ENCODE measurements at regions of chr15 and their contacts with region 1.

Region 1: DNA sequence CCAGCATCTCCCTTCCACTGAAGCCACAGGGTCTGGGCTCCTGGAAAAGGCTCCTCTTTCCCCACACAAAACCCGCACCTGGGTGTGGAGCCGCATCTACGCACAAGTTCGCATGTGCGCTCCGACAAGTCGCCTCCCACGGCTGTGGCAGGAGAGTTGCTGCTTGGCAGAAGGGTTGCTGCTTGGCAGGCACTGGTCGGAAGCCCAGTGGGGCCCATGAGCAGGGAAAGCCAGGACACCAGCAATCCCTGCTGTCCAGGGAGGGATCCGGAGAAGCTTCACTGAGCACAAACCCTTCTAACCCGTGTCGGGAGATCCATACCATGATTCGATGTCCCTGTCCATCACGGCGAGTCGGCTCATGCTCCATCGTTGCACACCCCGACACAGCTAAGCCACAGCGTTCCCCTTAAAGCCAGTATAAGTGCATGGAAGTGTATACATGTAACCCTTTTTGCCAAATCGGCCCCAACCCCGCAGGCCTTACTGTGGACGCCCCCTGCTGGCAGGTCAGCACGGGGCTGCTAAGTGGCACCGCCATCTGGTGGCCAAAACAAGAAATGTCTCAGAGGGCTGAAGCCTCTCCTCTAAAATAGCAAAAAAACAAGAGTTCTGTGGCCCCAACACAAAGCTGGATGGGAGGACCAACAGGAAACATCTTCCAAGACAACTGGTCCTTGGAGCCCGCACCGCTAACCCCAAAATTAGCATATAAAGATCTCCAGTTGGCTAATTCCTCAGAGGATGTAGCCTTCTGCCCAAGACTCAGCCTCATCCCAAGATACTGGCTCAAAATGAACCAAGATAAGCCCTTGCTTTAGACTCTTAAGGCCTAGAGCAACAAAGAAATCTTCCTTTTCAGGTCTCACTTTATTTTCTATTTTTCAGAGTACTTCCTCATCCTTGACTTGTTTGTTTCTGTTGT is 8.3 kb downstream of the ANKRD63 start:
- DNase-seq: peak; percentile 19
- ATAC-seq: peak; percentile 78
- H3K4me3 ChIP-seq: no peak overlapping the region
- H3K27ac ChIP-seq: no peak overlapping the region
- H3K4me1 ChIP-seq: peaks cover 6% of the 10 kb centered on the region
- H3K27me3 ChIP-seq: 0 out of 4 replicates have a peak, but pooled peaks cover 0 to 2% of the 10 kb centered on the region in 2 experiments
- CTCF ChIP-seq: peak; percentile 100; a peak in 5 of 6 replicates
- EP300 ChIP-seq: no peak
- POLR2A ChIP-seq: no peak
- RAD21 ChIP-seq: peak; percentile 98

Region 2: DNA sequence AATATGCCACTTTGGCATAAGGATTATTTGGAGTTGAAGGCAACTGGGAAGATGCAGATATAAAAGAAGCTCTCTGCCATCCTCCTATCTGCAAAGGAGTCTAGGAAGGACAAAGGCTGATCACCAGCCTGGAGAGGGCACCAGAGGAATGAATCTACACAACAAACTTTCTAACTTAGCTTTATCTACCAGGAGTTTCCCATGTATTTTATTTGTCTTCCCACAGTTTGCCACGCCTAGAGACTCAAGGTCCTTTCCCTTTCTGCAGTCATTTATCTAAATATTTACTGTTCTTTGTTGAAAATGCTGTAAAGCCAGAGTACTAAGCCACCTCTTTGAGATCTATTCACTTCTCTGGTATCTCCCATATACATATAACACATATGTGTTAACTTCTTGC is 386.8 kb before region 1 on chr15:
- CTCF ChIA-PET with region 1: interaction called, 12 read pairs
- POLR2A ChIA-PET with region 1: no interaction called
- RAD21 ChIA-PET with region 1: interaction called, 7 read pairs
- SMC1A ChIA-PET with region 1: interaction called, 10 read pairs
- in situ Hi-C with region 1: loop called (anchors 10 kb)
- intact Hi-C with region 1: loop called (anchors 10 kb)
- DNase-seq: no peak
- ATAC-seq: peak; percentile 75
- H3K4me3 ChIP-seq: no peak overlapping the region
- H3K27ac ChIP-seq: no peak overlapping the region
- H3K4me1 ChIP-seq: no peaks in the 10 kb centered on the region
- H3K27me3 ChIP-seq: no peaks in the 10 kb centered on the region; a peak in 1 of 4 replicates
- CTCF ChIP-seq: peak; percentile 20 to 55 (median 35); a peak in 4 of 6 replicates
- EP300 ChIP-seq: no peak
- POLR2A ChIP-seq: no peak
- RAD21 ChIP-seq: peak; percentile 26; the same call in 1 of the 2 replicates

Region 3: DNA sequence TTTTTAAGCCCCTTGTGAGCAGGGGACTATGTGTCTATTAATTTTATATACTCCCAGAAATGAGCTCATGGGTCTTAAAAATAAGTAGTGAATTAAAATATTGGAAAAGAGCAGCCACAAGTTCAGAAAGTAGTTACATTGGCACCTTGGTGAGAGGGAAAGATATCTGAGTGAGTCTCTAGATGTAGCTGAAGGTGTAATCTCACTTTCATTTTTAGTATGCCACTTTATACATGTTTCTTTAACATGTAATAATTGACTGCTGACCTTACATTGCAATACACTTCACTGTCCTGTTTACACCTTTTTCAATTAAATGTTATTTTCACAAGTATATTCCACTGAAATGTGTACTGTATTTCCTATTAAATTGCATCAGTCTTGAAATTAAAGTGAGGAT is 47.9 kb before region 1 on chr15:
- CTCF ChIA-PET with region 1: interaction called, 296 read pairs
- POLR2A ChIA-PET with region 1: no interaction called
- RAD21 ChIA-PET with region 1: interaction called, 8 read pairs
- SMC1A ChIA-PET with region 1: interaction called, 3 read pairs
- in situ Hi-C with region 1: no loop called
- intact Hi-C with region 1: no loop called
- DNase-seq: no peak
- ATAC-seq: peak; percentile 83
- H3K4me3 ChIP-seq: no peak overlapping the region
- H3K27ac ChIP-seq: no peak overlapping the region
- H3K4me1 ChIP-seq: no peaks in the 10 kb centered on the region; the same call in 1 of the 2 replicates
- H3K27me3 ChIP-seq: no peaks in the 10 kb centered on the region
- CTCF ChIP-seq: no peak
- EP300 ChIP-seq: no peak
- POLR2A ChIP-seq: no peak
- RAD21 ChIP-seq: no peak

Region 4: GRCh38 chr15:40256638-40257235 is 17.9 kb before region 1 on chr15:
- CTCF ChIA-PET with region 1: interaction called, 27 read pairs
- POLR2A ChIA-PET with region 1: no interaction called
- RAD21 ChIA-PET with region 1: interaction called, 3 read pairs
- SMC1A ChIA-PET with region 1: interaction called, 5 read pairs
- in situ Hi-C with region 1: no loop called
- intact Hi-C with region 1: no loop called
- DNase-seq: no peak
- ATAC-seq: peak; percentile 33
- H3K4me3 ChIP-seq: no peak overlapping the region
- H3K27ac ChIP-seq: no peak overlapping the region
- H3K4me1 ChIP-seq: peaks cover 3% of the 10 kb centered on the region; the same call in 1 of the 2 replicates
- H3K27me3 ChIP-seq: peaks cover 0 to 3% of the 10 kb centered on the region in 2 experiments; a peak in 3 of 4 replicates
- CTCF ChIP-seq: no peak
- EP300 ChIP-seq: no peak
- POLR2A ChIP-seq: no peak
- RAD21 ChIP-seq: no peak

Region 5: DNA sequence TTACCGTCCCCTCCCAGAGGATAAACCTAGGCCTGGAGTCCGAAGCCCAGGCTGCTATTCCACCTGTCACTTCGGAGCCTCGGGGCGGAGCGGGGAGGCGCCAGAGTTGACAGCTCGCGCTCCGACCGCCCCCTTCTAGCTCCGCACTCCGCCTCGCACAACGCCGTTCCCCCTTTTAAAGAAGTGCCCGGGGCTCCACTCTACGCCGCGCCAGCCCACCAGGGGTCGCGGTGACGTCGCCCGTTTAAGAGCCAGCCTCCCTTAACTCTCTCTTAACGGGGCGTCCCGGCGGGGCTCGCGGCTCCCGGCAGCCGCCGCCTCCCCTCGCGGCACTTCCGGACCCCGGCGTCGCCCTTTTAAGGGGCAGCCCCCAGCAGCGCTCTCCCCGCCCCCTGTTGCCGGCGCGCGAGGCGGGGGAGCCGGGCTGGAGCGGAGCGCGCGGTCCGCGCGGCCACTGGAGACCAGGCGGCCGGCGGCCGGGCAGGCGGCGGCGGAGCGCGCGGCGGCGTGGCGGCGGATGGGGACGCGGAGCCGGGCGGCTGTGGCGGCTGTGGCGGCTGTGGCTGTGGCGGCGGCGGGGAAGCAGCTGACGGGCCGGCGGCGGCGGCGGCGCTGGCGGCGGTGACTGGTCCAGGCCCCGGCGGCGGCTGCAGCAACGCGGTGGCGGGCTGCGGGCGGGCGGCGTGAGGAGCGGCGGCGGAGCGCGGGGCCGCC is 48.8 kb after region 1 on chr15 and contains the start of gene INAFM2:
- CTCF ChIA-PET with region 1: interaction called, 54 read pairs
- POLR2A ChIA-PET with region 1: no interaction called
- RAD21 ChIA-PET with region 1: interaction called, 3 read pairs
- SMC1A ChIA-PET with region 1: interaction called, 7 read pairs
- in situ Hi-C with region 1: no loop called
- intact Hi-C with region 1: no loop called
- DNase-seq: peak; percentile 48
- ATAC-seq: peak; percentile 92
- H3K4me3 ChIP-seq: peak within 1 kb of the TSS; percentile 72
- H3K27ac ChIP-seq: no peak within 1 kb of the TSS
- H3K4me1 ChIP-seq: peaks cover 5% of the 10 kb centered on the region
- H3K27me3 ChIP-seq: no peaks in the 10 kb centered on the region
- CTCF ChIP-seq: peak; percentile 39 to 40 (median 39); a peak in 5 of 6 replicates
- EP300 ChIP-seq: no peak
- POLR2A ChIP-seq: peak; percentile 41; the same call in 1 of the 2 replicates
- RAD21 ChIP-seq: no peak
- polyA plus RNA-seq, gene INAFM2: 2.0 to 2.4 TPM

Region 6: GRCh38 chr15:40344631-40345120 is 70.1 kb after region 1 on chr15:
- CTCF ChIA-PET with region 1: interaction called, 171 read pairs
- POLR2A ChIA-PET with region 1: no interaction called
- RAD21 ChIA-PET with region 1: interaction called, 93 read pairs
- SMC1A ChIA-PET with region 1: no interaction called
- in situ Hi-C with region 1: no loop called
- intact Hi-C with region 1: no loop called
- DNase-seq: no peak
- ATAC-seq: peak; percentile 91
- H3K4me3 ChIP-seq: no peak overlapping the region
- H3K27ac ChIP-seq: no peak overlapping the region
- H3K4me1 ChIP-seq: no peaks in the 10 kb centered on the region
- H3K27me3 ChIP-seq: no peaks in the 10 kb centered on the region; a peak in 1 of 4 replicates
- CTCF ChIP-seq: peak; percentile 77 to 84 (median 83)
- EP300 ChIP-seq: no peak
- POLR2A ChIP-seq: no peak
- RAD21 ChIP-seq: peak; percentile 79